Vagina (tissue), 2 donors: ENCODE measurements at regions of chr13 and their contacts with region 1.

Region 1: GRCh38 chr13:71613066-71613745 is 253.8 kb downstream of the DACH1 start:
- DNase-seq: no peak
- H3K4me3 ChIP-seq: no peak overlapping the region
- H3K27ac ChIP-seq: no peak overlapping the region
- H3K4me1 ChIP-seq: no peaks in the 10 kb centered on the region
- H3K27me3 ChIP-seq: no peaks in the 10 kb centered on the region
- CTCF ChIP-seq: no peak
- POLR2A ChIP-seq: no peak

Region 2: GRCh38 chr13:71643448-71643860 is 30.2 kb after region 1 on chr13:
- intact Hi-C with region 1: loop called (anchors 2 kb)
- DNase-seq: no peak
- H3K4me3 ChIP-seq: no peak overlapping the region
- H3K27ac ChIP-seq: no peak overlapping the region
- H3K4me1 ChIP-seq: no peaks in the 10 kb centered on the region
- H3K27me3 ChIP-seq: no peaks in the 10 kb centered on the region
- CTCF ChIP-seq: no peak
- POLR2A ChIP-seq: no peak